HepG2 (cell line): ENCODE measurements at regions of chr20 and their contacts with region 1.

Region 1: DNA sequence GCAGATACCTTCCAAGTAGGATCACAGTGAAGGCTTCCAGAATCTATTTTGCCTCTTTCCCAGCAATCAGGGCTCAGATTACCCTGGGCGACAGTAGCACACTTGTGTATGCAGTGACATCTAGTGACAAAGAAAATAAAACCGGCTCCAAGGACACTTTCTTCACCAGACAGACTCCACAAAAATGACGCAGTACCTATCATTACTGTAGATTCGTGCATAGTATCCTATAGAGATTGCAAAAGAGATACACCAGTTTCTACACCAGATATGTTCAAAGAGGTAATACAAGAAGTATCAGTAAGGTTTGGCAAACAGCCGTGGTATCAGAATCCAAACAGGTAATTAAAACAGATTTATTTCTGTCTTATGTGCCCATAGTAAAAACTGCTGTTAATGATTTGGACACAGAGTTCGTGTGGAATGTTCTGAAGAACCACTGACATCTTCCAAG is 600.4 kb upstream of the JAG1 start:
- DNase-seq: peak; percentile 75
- ATAC-seq: peak; percentile 91
- H3K4me3 ChIP-seq: no peak overlapping the region
- H3K27ac ChIP-seq: no peak overlapping the region
- H3K4me1 ChIP-seq: no peaks in the 10 kb centered on the region
- H3K27me3 ChIP-seq: peaks cover 0 to 8% of the 10 kb centered on the region in 2 experiments; a peak in 1 of 5 replicates
- CTCF ChIP-seq: peak; percentile 91
- EP300 ChIP-seq: no peak
- POLR2A ChIP-seq: no peak
- RAD21 ChIP-seq: peak; percentile 83

Region 2: DNA sequence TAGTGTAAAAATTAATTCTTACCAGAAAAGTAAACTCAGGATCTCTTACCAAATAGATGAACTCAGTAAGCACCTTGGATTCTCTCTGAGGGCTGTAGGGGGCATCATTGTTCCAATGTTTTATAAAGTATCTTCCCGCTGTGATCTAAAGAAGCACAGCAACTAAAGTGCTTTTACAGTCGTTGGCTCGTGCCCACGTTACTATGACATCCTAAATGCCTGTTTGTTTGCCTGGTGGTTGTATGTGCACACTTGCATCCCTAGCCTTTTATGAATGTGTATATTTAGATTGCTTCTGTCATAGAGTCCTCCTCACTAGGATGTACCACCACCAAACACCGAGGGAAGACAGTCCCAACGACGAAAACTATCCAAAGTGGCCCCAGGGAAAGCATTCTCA is 804.6 kb before region 1 on chr20:
- CTCF ChIA-PET with region 1: interaction called, 3 read pairs
- POLR2A ChIA-PET with region 1: no interaction called
- in situ Hi-C with region 1: no loop called
- intact Hi-C with region 1: loop called (anchors 5 kb)
- DNase-seq: peak; percentile 77
- ATAC-seq: peak; percentile 80
- H3K4me3 ChIP-seq: no peak overlapping the region
- H3K27ac ChIP-seq: no peak overlapping the region
- H3K4me1 ChIP-seq: peaks cover 27% of the 10 kb centered on the region
- H3K27me3 ChIP-seq: no peaks in the 10 kb centered on the region
- CTCF ChIP-seq: peak; percentile 74
- EP300 ChIP-seq: no peak
- POLR2A ChIP-seq: no peak
- RAD21 ChIP-seq: peak; percentile 65

Region 3: GRCh38 chr20:10611357-10611756 is 662.8 kb before region 1 on chr20:
- CTCF ChIA-PET with region 1: no interaction called
- POLR2A ChIA-PET with region 1: no interaction called
- in situ Hi-C with region 1: no loop called
- intact Hi-C with region 1: loop called (anchors 1 kb)
- DNase-seq: peak; percentile 44
- ATAC-seq: peak; percentile 97
- H3K4me3 ChIP-seq: no peak overlapping the region
- H3K27ac ChIP-seq: no peak overlapping the region
- H3K4me1 ChIP-seq: peaks cover under 1% of the 10 kb centered on the region
- H3K27me3 ChIP-seq: no peaks in the 10 kb centered on the region
- CTCF ChIP-seq: peak; percentile 83
- EP300 ChIP-seq: peak in 1 of 2 experiments; percentile 15; a peak in 1 of 4 replicates
- POLR2A ChIP-seq: no peak
- RAD21 ChIP-seq: peak; percentile 57

Region 4: DNA sequence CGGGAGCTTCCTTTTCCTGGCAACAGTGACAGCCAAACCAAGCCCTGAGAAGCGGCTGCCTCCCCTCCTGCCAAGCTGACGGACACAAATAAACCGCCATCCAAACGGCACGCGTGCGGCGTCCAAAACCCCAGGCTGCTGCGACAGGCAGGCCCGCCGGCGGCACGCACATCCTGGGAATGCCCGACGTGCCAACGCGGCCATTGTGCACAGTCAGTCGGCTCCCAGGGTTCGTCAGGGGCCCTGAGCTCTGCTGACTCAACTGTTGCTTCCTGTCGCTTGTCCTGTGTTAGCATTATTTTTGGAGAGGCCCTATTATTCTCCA is 607.1 kb before region 1 on chr20:
- CTCF ChIA-PET with region 1: no interaction called
- POLR2A ChIA-PET with region 1: no interaction called
- in situ Hi-C with region 1: loop called (anchors 5 kb)
- intact Hi-C with region 1: no loop called
- DNase-seq: no peak
- ATAC-seq: no peak
- H3K4me3 ChIP-seq: peak overlapping the region in 1 of 3 experiments; percentile 6; a peak in 1 of 6 replicates
- H3K27ac ChIP-seq: no peak overlapping the region
- H3K4me1 ChIP-seq: peaks cover 97% of the 10 kb centered on the region
- H3K27me3 ChIP-seq: no peaks in the 10 kb centered on the region
- CTCF ChIP-seq: no peak
- EP300 ChIP-seq: no peak
- POLR2A ChIP-seq: no peak
- RAD21 ChIP-seq: no peak

Region 5: GRCh38 chr20:11544029-11544678 is 270.0 kb after region 1 on chr20:
- CTCF ChIA-PET with region 1: no interaction called
- POLR2A ChIA-PET with region 1: no interaction called
- in situ Hi-C with region 1: no loop called
- intact Hi-C with region 1: loop called (anchors 10 kb)
- DNase-seq: peak; percentile 72
- ATAC-seq: peak; percentile 88
- H3K4me3 ChIP-seq: no peak overlapping the region
- H3K27ac ChIP-seq: no peak overlapping the region
- H3K4me1 ChIP-seq: peaks cover 12% of the 10 kb centered on the region
- H3K27me3 ChIP-seq: no peaks in the 10 kb centered on the region; a peak in 1 of 5 replicates
- CTCF ChIP-seq: peak; percentile 85
- EP300 ChIP-seq: no peak
- POLR2A ChIP-seq: no peak
- RAD21 ChIP-seq: peak; percentile 41; the same call in 1 of the 2 replicates